ENCODE measurements at regions of chr17 and their contacts with region 1.

Region 1: DNA sequence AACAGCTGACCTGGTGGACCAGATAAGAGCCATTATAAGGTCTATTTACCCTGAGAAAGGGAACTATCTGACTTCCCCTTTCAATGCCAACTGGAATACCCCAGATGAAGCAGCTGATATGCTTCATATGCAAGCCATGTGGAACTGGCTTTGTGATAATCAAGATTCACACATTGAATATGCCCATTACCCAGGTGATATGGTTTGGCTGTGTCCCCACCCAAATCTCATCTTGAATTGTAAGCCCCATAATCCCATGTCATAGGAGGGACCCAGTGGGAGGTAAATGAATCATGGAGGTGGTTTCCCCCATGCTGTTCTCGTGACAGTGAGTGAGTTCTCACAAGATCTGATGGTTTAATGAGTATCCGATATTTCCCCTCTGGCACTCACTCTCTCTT is 42.1 kb downstream of the IKZF3 start:
- DNase-seq: no peak
- ATAC-seq: no peak
- H3K4me3 ChIP-seq: no peak overlapping the region
- H3K4me3 Mint-ChIP-seq: peak overlapping the region in 3 of 10 donors; percentile 55 to 73 (median 67)
- H3K27ac ChIP-seq: peak overlapping the region; percentile 61
- H3K27ac Mint-ChIP-seq: peak overlapping the region in 8 of 9 donors; percentile 79 to 97 (median 93)
- H3K4me1 ChIP-seq: peaks cover 44 to 50% of the 10 kb centered on the region in 2 donors
- H3K4me1 Mint-ChIP-seq: peaks cover 26 to 66% (median 48%) of the 10 kb centered on the region in 7 donors
- H3K27me3 ChIP-seq: no peaks in the 10 kb centered on the region
- H3K27me3 Mint-ChIP-seq: no peaks in the 10 kb centered on the region

Region 2: GRCh38 chr17:39769974-39770587 is 52.0 kb before region 1 on chr17:
- CTCF ChIA-PET with region 1: interaction called, 3 read pairs
- POLR2A ChIA-PET with region 1: interaction called, 13 read pairs
- intact Hi-C with region 1: no loop called
- DNase-seq: peak in 7 of 9 donors; percentile 46 to 81 (median 63)
- ATAC-seq: peak; percentile 81
- H3K4me3 ChIP-seq: no peak overlapping the region
- H3K4me3 Mint-ChIP-seq: peak overlapping the region; percentile 29 to 83 (median 57)
- H3K27ac ChIP-seq: peak overlapping the region; percentile 71
- H3K27ac Mint-ChIP-seq: peak overlapping the region; percentile 78 to 98 (median 94)
- H3K4me1 ChIP-seq: peaks cover 77 to 92% of the 10 kb centered on the region in 2 donors
- H3K4me1 Mint-ChIP-seq: peaks cover 73 to 99% (median 98%) of the 10 kb centered on the region in 7 donors
- H3K27me3 ChIP-seq: no peaks in the 10 kb centered on the region
- H3K27me3 Mint-ChIP-seq: no peaks in the 10 kb centered on the region

Region 3: DNA sequence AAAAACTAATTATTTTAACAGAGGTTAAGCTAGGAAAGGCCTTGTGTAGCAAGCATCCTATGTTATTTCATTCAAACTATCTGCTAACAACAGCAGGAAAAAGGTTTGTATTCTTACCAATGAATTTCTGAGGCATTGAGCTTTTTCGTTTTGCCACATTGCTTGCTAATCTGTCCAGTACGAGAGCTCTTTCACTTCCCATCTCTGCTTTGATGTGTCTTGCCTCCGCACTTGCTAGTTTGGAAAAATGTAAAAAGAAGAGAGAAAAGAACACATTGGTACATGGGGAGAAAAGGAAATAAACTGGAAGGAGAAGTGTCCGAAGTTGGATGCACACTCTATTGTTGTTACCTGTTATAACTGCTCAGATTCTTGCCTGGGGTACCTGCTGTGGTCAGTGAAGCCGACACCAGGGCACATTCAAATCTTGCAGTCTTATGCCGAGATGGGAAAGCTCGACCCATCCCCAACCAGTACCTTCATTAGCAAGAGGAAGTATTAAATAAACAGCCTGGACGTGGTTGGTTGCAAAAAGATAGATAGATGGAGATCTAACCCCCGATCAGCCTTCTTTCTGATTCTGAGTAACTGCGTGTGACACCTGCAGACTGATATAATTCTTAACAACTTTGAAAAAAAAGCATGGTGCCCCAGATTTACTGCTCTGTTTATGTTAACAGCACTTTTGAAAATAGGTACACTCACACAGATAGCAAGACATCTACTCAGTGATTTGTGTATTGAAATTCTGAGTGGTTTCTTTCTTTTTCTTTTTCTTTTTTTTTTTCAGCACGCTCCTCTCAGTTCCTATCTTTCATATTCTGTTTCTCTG is 44.3 kb before region 1 on chr17:
- CTCF ChIA-PET with region 1: interaction called, 5 read pairs
- POLR2A ChIA-PET with region 1: interaction called, 12 read pairs
- intact Hi-C with region 1: loop called in 1 of 2 experiments (anchors 1 kb)
- DNase-seq: peak in 1 of 9 donors; percentile 40
- ATAC-seq: peak; percentile 72
- H3K4me3 ChIP-seq: peak overlapping the region; percentile 74
- H3K4me3 Mint-ChIP-seq: peak overlapping the region; percentile 79 to 95 (median 90)
- H3K27ac ChIP-seq: peak overlapping the region; percentile 77
- H3K27ac Mint-ChIP-seq: peak overlapping the region; percentile 68 to 98 (median 94)
- H3K4me1 ChIP-seq: peaks cover 61 to 75% of the 10 kb centered on the region in 2 donors
- H3K4me1 Mint-ChIP-seq: peaks cover 60 to 91% (median 86%) of the 10 kb centered on the region in 7 donors
- H3K27me3 ChIP-seq: no peaks in the 10 kb centered on the region
- H3K27me3 Mint-ChIP-seq: no peaks in the 10 kb centered on the region

Region 4: DNA sequence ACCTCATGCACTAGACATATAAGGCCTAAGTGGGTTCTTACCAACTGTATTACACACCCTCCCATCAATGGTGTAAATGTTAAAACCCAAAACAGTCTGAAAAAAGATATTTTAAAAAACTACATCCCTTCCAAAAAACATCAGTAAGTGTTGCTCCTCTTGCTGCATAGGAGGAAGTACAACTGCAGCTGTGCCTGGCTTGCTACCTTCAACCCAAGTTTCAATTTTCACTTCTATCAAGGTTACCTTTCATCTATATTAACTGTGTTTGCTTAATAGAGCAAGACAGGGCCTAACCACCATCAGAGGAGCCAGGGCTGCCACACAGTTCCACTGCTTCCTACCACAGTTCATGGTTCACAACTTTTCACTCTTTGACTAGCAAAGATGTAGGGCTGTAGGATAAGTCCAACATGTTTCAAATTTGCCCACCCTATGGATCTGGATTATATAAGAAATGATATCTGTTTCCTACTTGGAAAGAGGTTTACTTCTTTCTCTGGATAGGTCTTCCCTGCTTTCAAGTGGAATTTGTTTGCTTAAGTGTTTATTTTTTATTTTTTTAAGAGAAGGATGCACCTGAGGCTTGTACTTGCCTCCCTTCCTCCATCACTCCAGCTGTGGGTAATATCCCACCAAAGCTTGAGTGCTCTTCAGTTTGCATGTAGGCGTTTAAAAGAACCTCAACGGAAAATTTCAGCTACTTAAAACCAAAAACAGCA is 27.6 kb before region 1 on chr17:
- CTCF ChIA-PET with region 1: interaction called, 5 read pairs
- POLR2A ChIA-PET with region 1: interaction called, 11 read pairs
- intact Hi-C with region 1: no loop called
- DNase-seq: peak in 7 of 9 donors; percentile 28 to 67 (median 44)
- ATAC-seq: peak; percentile 83
- H3K4me3 ChIP-seq: peak overlapping the region; percentile 2
- H3K4me3 Mint-ChIP-seq: peak overlapping the region; percentile 37 to 82 (median 76)
- H3K27ac ChIP-seq: peak overlapping the region; percentile 65
- H3K27ac Mint-ChIP-seq: peak overlapping the region; percentile 86 to 96 (median 93)
- H3K4me1 ChIP-seq: peaks cover 56 to 66% of the 10 kb centered on the region in 2 donors
- H3K4me1 Mint-ChIP-seq: peaks cover 49 to 86% (median 82%) of the 10 kb centered on the region in 7 donors
- H3K27me3 ChIP-seq: no peaks in the 10 kb centered on the region
- H3K27me3 Mint-ChIP-seq: no peaks in the 10 kb centered on the region

Region 5: GRCh38 chr17:39800540-39800939 is 21.5 kb before region 1 on chr17:
- CTCF ChIA-PET with region 1: no interaction called
- POLR2A ChIA-PET with region 1: interaction called, 11 read pairs
- intact Hi-C with region 1: loop called (anchors 1 to 2 kb)
- DNase-seq: peak in 8 of 9 donors; percentile 46 to 81 (median 80)
- ATAC-seq: peak; percentile 99
- H3K4me3 ChIP-seq: peak overlapping the region; percentile 38
- H3K4me3 Mint-ChIP-seq: peak overlapping the region; percentile 22 to 81 (median 61)
- H3K27ac ChIP-seq: peak overlapping the region; percentile 52
- H3K27ac Mint-ChIP-seq: peak overlapping the region; percentile 89 to 97 (median 94)
- H3K4me1 ChIP-seq: peaks cover 27 to 53% of the 10 kb centered on the region in 2 donors
- H3K4me1 Mint-ChIP-seq: peaks cover 35 to 82% (median 69%) of the 10 kb centered on the region in 7 donors
- H3K27me3 ChIP-seq: no peaks in the 10 kb centered on the region
- H3K27me3 Mint-ChIP-seq: no peaks in the 10 kb centered on the region

Region 6: DNA sequence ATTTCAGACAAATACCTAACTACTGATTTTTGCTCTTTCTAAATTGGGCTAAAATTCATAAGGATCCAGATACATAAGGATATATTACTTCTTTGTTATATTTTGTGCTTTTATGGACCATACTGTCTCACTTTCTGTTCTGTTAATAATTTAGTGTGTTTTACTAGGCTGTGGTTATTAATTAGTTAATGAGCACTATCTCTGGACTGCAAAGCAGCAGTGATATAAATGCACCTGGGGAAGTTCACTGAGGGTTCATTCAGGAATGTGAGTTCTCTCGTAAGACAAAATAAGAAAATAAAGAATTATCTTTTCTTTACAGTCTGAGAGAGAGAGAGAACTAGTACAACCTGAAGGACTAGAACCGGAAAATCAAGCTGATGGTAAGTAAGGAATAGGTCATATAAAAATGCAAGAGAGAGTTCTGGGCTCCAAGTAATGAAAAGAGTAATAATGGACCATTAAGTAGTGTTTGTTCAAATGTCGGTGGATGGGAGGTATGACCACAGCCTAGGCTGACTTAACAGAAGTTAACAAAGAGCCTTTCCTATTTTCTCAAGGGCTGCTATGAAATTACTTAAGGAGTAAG is 13.5 kb before region 1 on chr17:
- CTCF ChIA-PET with region 1: interaction called, 6 read pairs
- POLR2A ChIA-PET with region 1: interaction called, 11 read pairs
- intact Hi-C with region 1: loop called in 1 of 2 experiments (anchors 1 kb)
- DNase-seq: no peak
- ATAC-seq: no peak
- H3K4me3 ChIP-seq: no peak overlapping the region
- H3K4me3 Mint-ChIP-seq: peak overlapping the region in 1 of 10 donors; percentile 27
- H3K27ac ChIP-seq: no peak overlapping the region
- H3K27ac Mint-ChIP-seq: peak overlapping the region in 4 of 9 donors; percentile 51 to 94 (median 60)
- H3K4me1 ChIP-seq: peaks cover 13 to 38% of the 10 kb centered on the region in 2 donors
- H3K4me1 Mint-ChIP-seq: peaks cover 38 to 87% (median 81%) of the 10 kb centered on the region in 7 donors
- H3K27me3 ChIP-seq: no peaks in the 10 kb centered on the region
- H3K27me3 Mint-ChIP-seq: no peaks in the 10 kb centered on the region

Region 7: GRCh38 chr17:39845052-39845846 is 23.2 kb after region 1 on chr17:
- CTCF ChIA-PET with region 1: interaction called, 4 read pairs
- POLR2A ChIA-PET with region 1: interaction called, 5 read pairs
- intact Hi-C with region 1: loop called in 1 of 2 experiments (anchors 2 kb)
- DNase-seq: no peak
- ATAC-seq: no peak
- H3K4me3 ChIP-seq: no peak overlapping the region
- H3K4me3 Mint-ChIP-seq: peak overlapping the region in 3 of 10 donors; percentile 2 to 30 (median 12)
- H3K27ac ChIP-seq: peak overlapping the region; percentile 57
- H3K27ac Mint-ChIP-seq: peak overlapping the region in 8 of 9 donors; percentile 68 to 94 (median 87)
- H3K4me1 ChIP-seq: peaks cover 32 to 36% of the 10 kb centered on the region in 2 donors
- H3K4me1 Mint-ChIP-seq: peaks cover 38 to 94% (median 83%) of the 10 kb centered on the region in 7 donors
- H3K27me3 ChIP-seq: no peaks in the 10 kb centered on the region
- H3K27me3 Mint-ChIP-seq: no peaks in the 10 kb centered on the region